Naive thymus-derived CD4-positive, alpha-beta T cell (primary cell): ENCODE measurements at regions of chr20 and their contacts with region 1.

Region 1: GRCh38 chr20:36951198-36951976 is at the start of gene SAMHD1:
- DNase-seq: peak; percentile 72 to 93 (median 81)
- ATAC-seq: peak; percentile 86
- H3K4me3 ChIP-seq: peak within 1 kb of the TSS; percentile 94
- H3K4me3 Mint-ChIP-seq: peak within 1 kb of the TSS; percentile 93 to 99 (median 98)
- H3K27ac ChIP-seq: peak within 1 kb of the TSS; percentile 97
- H3K27ac Mint-ChIP-seq: peak within 1 kb of the TSS; percentile 96 to 99 (median 98)
- H3K4me1 ChIP-seq: peaks cover 40 to 45% of the 10 kb centered on the region in 2 donors
- H3K4me1 Mint-ChIP-seq: peaks cover 28 to 50% (median 37%) of the 10 kb centered on the region in 7 donors
- H3K27me3 ChIP-seq: no peaks in the 10 kb centered on the region
- H3K27me3 Mint-ChIP-seq: no peaks in the 10 kb centered on the region
- total RNA-seq, gene SAMHD1: 271 to 393 (median 338) TPM

Region 2: DNA sequence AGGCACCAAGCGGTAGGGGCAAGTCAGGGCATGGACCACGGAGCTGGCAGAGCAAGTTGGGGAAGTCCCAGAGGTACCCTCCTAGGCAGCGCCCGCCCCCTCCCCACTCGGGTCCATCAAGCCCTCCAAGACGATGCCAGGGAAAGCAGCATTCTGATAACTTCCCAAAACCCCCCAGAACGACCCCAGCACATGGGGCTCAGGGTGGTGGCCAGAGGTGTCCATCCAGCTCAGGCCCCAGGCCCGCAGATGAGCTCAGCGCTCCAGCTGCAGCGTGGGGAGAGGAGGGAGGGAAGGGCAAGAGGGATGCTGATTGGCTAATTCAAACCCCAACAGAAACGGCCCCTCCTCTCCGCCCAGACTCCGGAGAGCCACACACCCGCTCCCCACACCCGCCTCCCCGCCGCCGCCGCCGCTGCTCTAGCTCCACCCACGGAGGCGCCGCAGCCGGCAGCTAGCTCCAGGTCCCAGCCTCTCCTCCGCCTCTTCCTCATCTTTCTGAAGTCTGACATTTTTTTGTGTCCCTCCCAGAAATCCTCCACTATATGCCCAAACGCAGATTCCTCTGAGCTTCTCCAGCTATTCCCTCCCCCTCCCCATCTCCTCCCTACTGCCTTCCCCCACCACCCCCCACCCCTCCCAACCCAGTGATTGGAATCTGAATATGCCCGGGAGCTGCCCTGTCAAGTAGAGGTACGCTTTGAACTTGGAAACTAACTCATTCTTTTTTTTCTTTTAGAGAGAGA is 115.8 kb before region 1 on chr20:
- CTCF ChIA-PET with region 1: no interaction called
- POLR2A ChIA-PET with region 1: no interaction called
- intact Hi-C with region 1: no loop called
- DNase-seq: peak; percentile 56 to 85 (median 72)
- ATAC-seq: peak; percentile 99
- H3K4me3 ChIP-seq: peak overlapping the region; percentile 63
- H3K4me3 Mint-ChIP-seq: peak overlapping the region; percentile 71 to 92 (median 82)
- H3K27ac ChIP-seq: peak overlapping the region; percentile 54
- H3K27ac Mint-ChIP-seq: peak overlapping the region in 4 of 9 donors; percentile 75 to 92 (median 82)
- H3K4me1 ChIP-seq: peaks cover 5 to 9% of the 10 kb centered on the region in 2 donors
- H3K4me1 Mint-ChIP-seq: peaks cover 5 to 32% (median 10%) of the 10 kb centered on the region in 7 donors
- H3K27me3 ChIP-seq: no peaks in the 10 kb centered on the region
- H3K27me3 Mint-ChIP-seq: no peaks in the 10 kb centered on the region

Region 3: DNA sequence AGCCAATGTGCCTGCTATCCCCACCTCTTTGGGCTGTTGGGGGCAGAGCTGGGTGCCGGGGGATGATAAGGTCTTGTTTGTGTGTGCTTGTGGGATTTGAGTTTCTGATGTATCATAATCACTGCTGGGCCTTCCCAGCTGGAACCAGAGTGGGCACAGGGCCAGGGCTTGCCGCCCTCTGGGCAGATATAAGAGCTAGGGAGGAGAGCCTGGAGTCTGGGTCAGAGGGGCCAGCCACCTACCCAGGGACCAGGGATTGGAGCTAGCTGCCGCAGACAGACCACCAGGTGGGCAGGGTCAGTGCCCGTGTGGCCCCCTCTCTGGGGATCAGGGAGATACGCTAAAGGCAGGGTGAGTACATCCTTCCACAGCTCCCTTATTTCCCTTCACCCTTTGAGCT is 78.5 kb before region 1 on chr20:
- CTCF ChIA-PET with region 1: no interaction called
- POLR2A ChIA-PET with region 1: no interaction called
- intact Hi-C with region 1: no loop called
- DNase-seq: no peak
- ATAC-seq: no peak
- H3K4me3 ChIP-seq: no peak overlapping the region
- H3K4me3 Mint-ChIP-seq: no peak overlapping the region
- H3K27ac ChIP-seq: no peak overlapping the region
- H3K27ac Mint-ChIP-seq: no peak overlapping the region
- H3K4me1 ChIP-seq: no peaks in the 10 kb centered on the region
- H3K4me1 Mint-ChIP-seq: peaks cover 0 to 2% (median 0%) of the 10 kb centered on the region in 7 donors
- H3K27me3 ChIP-seq: no peaks in the 10 kb centered on the region
- H3K27me3 Mint-ChIP-seq: no peaks in the 10 kb centered on the region

Region 4: DNA sequence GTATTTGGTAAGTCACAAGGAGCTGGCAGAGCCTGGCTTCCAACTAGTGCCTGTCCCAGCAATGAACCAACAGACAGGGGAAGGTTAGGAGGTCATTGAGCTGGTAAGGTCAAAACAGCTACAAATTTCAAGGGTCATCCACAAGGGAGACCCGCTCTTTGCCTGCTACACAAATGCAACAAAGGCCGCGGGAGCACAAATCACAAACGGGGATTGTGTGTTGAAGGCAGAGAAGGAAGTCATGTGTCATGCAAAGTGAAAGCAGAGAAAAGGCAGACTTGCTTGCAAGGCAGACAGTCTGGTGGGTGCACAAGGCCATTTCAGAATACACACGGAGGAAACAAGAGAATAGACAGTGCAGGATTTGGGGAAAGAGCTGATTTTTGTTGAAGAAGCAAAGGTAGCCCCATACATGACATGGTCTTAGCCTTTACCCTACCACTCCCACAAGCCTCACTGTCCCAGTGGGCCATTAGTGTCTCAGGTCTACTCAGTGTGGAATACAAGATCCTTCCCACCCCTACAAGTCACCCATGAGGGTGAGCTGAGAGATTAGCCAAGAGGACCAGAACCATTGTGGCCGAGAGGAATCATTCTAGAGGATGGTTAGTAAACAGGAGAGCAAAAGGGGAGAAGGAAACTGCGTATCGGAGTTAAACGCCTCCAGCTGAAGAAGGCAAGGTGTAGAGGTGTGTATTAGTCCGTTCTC is 18.2 kb after region 1 on chr20:
- CTCF ChIA-PET with region 1: interaction called, 11 read pairs
- POLR2A ChIA-PET with region 1: interaction called, 57 read pairs
- intact Hi-C with region 1: loop called (anchors 1 to 2 kb)
- DNase-seq: peak in 7 of 9 donors; percentile 47 to 66 (median 56)
- ATAC-seq: peak; percentile 77
- H3K4me3 ChIP-seq: peak overlapping the region; percentile 19
- H3K4me3 Mint-ChIP-seq: peak overlapping the region; percentile 47 to 91 (median 72)
- H3K27ac ChIP-seq: peak overlapping the region; percentile 74
- H3K27ac Mint-ChIP-seq: peak overlapping the region; percentile 89 to 100 (median 98)
- H3K4me1 ChIP-seq: peaks cover 32 to 74% of the 10 kb centered on the region in 2 donors
- H3K4me1 Mint-ChIP-seq: peaks cover 41 to 79% (median 71%) of the 10 kb centered on the region in 7 donors
- H3K27me3 ChIP-seq: no peaks in the 10 kb centered on the region
- H3K27me3 Mint-ChIP-seq: no peaks in the 10 kb centered on the region

Region 5: DNA sequence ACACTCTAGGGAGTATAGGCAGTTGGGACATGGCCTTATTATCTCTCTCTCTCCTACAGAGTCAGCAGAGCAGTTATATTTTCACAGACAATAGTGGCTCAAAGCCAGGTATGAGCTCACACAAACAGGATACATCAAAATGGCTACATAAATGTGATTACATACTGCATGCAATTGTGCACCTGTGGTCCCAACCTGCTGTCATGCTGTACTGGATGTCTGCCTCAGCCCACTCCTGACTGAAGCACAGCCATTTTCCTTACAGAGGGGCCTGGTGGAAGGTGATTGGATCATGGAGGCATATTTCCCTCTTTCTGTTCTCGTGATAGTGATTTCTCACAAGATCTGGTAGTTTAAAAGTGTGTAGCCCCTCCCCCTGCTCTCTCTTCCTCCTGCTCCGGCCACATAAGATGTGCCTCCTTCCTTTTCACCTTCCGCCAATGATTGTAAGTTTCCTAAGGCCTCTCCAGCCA is 37.1 kb after region 1 on chr20:
- CTCF ChIA-PET with region 1: interaction called, 3 read pairs
- POLR2A ChIA-PET with region 1: interaction called, 4 read pairs
- intact Hi-C with region 1: loop called in 1 of 2 experiments (anchors 5 kb)
- DNase-seq: peak in 7 of 9 donors; percentile 57 to 77 (median 66)
- ATAC-seq: peak; percentile 76
- H3K4me3 ChIP-seq: no peak overlapping the region
- H3K4me3 Mint-ChIP-seq: peak overlapping the region in 9 of 10 donors; percentile 18 to 85 (median 62)
- H3K27ac ChIP-seq: peak overlapping the region; percentile 72
- H3K27ac Mint-ChIP-seq: peak overlapping the region; percentile 62 to 99 (median 97)
- H3K4me1 ChIP-seq: peaks cover 9 to 32% of the 10 kb centered on the region in 2 donors
- H3K4me1 Mint-ChIP-seq: peaks cover 27 to 66% (median 53%) of the 10 kb centered on the region in 7 donors
- H3K27me3 ChIP-seq: no peaks in the 10 kb centered on the region
- H3K27me3 Mint-ChIP-seq: no peaks in the 10 kb centered on the region

Region 6: DNA sequence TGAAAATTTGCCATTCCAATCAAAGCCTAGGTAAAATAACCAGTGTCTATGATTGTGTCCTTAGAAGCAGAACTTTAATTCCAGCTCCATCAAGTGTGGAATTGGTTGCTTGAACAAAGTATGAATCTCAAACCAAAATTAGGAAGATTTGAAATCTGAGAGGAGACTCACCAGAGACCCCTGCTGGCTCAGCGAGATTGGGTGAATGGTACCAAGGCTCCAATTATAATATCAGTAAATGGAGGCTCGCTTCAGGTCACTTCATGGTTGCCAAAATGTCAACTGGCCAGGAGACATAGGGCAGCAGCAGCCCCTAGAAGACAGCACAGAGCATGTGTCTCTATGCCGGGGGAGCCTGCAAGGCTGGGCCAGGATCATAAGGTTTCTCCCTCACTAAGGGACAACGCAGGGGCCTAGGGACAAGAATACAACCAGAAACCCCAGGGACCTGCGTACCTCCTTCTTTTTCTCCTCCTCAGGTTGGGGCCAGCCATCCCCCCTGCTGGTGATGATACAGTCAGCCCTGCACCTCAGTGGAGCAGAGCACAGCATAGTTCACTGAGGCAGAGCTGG is 130.4 kb after region 1 on chr20:
- CTCF ChIA-PET with region 1: interaction called, 6 read pairs
- POLR2A ChIA-PET with region 1: interaction called, 7 read pairs
- intact Hi-C with region 1: loop called (anchors 2 to 10 kb)
- DNase-seq: peak in 7 of 9 donors; percentile 21 to 64 (median 54)
- ATAC-seq: peak; percentile 61
- H3K4me3 ChIP-seq: no peak overlapping the region
- H3K4me3 Mint-ChIP-seq: peak overlapping the region in 3 of 10 donors; percentile 5 to 42 (median 17)
- H3K27ac ChIP-seq: no peak overlapping the region
- H3K27ac Mint-ChIP-seq: peak overlapping the region; percentile 62 to 89 (median 82)
- H3K4me1 ChIP-seq: peaks cover 12% of the 10 kb centered on the region in 2 donors
- H3K4me1 Mint-ChIP-seq: peaks cover 2 to 37% (median 29%) of the 10 kb centered on the region in 7 donors
- H3K27me3 ChIP-seq: no peaks in the 10 kb centered on the region
- H3K27me3 Mint-ChIP-seq: no peaks in the 10 kb centered on the region

Region 7: DNA sequence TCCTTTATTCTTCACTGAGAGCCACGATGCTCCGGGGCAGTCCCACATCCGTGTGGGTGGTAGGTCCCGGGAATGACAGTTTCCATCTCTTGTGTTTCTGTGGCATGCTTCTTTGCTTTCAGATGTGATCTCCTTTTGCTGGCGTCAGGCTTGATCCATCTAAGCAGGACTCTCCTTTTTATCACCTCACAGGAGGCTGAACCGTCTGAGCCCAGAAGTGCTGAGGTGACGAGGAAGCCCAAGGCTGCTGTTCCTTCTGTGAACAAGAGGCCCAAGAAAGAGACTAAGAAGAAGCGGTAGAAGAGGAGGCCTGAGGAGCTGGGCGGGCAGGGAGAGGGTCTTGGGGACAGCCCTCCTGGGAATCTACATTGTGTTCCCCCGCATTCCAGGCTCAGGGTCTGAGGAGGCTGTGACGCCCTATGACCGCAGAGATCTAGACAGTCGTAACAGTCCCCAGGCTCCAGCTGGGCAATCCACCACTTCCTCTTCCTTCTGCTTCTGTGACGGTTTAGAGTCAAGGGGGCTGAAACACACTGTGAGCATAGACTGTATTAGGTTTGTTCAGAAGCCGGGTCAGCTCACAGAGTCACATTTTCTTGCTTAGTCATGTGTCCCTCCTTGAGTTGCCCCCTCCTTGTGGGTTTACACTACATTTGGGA is 364.9 kb after region 1 on chr20:
- CTCF ChIA-PET with region 1: no interaction called
- POLR2A ChIA-PET with region 1: no interaction called
- intact Hi-C with region 1: no loop called
- DNase-seq: peak in 6 of 9 donors; percentile 4 to 45 (median 20)
- ATAC-seq: peak; percentile 91
- H3K4me3 ChIP-seq: no peak overlapping the region
- H3K4me3 Mint-ChIP-seq: peak overlapping the region in 5 of 10 donors; percentile 1 to 50 (median 5)
- H3K27ac ChIP-seq: peak overlapping the region; percentile 57
- H3K27ac Mint-ChIP-seq: peak overlapping the region; percentile 73 to 94 (median 89)
- H3K4me1 ChIP-seq: peaks cover 0 to 6% of the 10 kb centered on the region in 2 donors
- H3K4me1 Mint-ChIP-seq: peaks cover 16 to 42% (median 35%) of the 10 kb centered on the region in 7 donors
- H3K27me3 ChIP-seq: no peaks in the 10 kb centered on the region
- H3K27me3 Mint-ChIP-seq: no peaks in the 10 kb centered on the region